Activated CD4-positive, alpha-beta T cell treated with anti-CD3 and anti-CD28 coated beads, Interleukin-2, amount 10 ng/mL, durations not matched to agents 24 days and 14 days (primary cell): ENCODE measurements at regions of chr20 and their contacts with region 1.

Region 1: DNA sequence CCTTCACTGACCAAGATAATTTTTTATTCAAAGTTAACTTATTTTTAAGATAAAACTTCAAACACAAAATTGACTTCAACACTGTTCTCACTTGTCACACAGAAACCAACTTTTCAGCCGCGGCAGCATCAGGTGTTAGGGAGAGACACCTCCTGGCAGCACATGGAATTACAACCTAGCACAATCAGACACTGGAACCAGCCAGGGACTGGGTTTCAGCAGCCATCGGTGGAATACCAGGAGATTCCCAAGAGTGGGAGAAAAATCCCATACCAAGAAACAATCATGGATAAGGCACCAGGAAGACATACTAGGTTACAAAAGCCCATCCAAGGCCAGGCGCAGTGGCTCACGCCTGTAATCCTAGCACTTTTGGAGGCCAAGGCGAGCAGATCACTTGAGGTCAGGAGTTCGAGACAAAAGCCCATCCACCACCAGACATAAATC is 70.0 kb downstream of the SNX5 start:
- DNase-seq: peak; percentile 90
- H3K4me3 Mint-ChIP-seq: no peak overlapping the region
- H3K27ac Mint-ChIP-seq: no peak overlapping the region
- H3K4me1 Mint-ChIP-seq: peaks cover 24% of the 10 kb centered on the region
- H3K27me3 Mint-ChIP-seq: peaks cover 33% of the 10 kb centered on the region

Region 2: GRCh38 chr20:17504898-17505635 is 393.5 kb before region 1 on chr20:
- intact Hi-C with region 1: loop called (anchors 1 kb)
- DNase-seq: peak; percentile 90
- H3K4me3 Mint-ChIP-seq: peak overlapping the region; percentile 88
- H3K27ac Mint-ChIP-seq: peak overlapping the region; percentile 92
- H3K4me1 Mint-ChIP-seq: peaks cover 47% of the 10 kb centered on the region
- H3K27me3 Mint-ChIP-seq: peaks cover 4% of the 10 kb centered on the region

Region 3: GRCh38 chr20:17662333-17663039 is 236.1 kb before region 1 on chr20:
- intact Hi-C with region 1: loop called (anchors 5 kb)
- DNase-seq: no peak
- H3K4me3 Mint-ChIP-seq: peak overlapping the region; percentile 28
- H3K27ac Mint-ChIP-seq: peak overlapping the region; percentile 73
- H3K4me1 Mint-ChIP-seq: peaks cover 49% of the 10 kb centered on the region
- H3K27me3 Mint-ChIP-seq: no peaks in the 10 kb centered on the region

Region 4: DNA sequence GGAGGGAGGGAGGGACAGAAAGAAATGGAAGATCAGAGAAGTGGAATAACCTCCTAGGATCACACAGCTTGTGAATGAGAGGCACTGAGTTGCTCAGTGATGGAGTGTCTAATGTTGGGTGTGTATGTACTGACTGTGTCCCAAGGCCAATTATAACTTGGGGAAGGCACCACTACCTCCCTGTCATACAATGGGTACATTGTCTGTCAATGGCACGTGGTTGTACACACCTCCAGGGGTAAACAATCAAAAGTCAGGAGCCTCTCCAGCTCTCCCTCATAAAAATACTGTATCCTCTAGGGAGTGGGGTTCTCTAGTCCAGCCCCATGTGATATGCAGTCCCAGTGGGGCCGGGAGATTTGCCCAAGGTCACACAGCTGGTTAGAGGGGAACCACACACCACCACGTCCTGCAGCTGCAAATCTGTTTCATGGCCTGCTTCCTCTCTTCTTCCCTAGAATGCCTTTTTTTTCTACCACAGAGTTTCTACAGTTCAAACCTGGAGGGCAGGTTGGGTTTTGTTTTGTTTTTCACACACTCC is 42.5 kb before region 1 on chr20:
- intact Hi-C with region 1: loop called (anchors 5 kb)
- DNase-seq: peak; percentile 69
- H3K4me3 Mint-ChIP-seq: no peak overlapping the region
- H3K27ac Mint-ChIP-seq: no peak overlapping the region
- H3K4me1 Mint-ChIP-seq: peaks cover 21% of the 10 kb centered on the region
- H3K27me3 Mint-ChIP-seq: peaks cover 14% of the 10 kb centered on the region

Region 5: GRCh38 chr20:17958373-17959256 is 60.0 kb after region 1 on chr20:
- intact Hi-C with region 1: loop called (anchors 5 kb)
- DNase-seq: no peak
- H3K4me3 Mint-ChIP-seq: peak overlapping the region; percentile 44
- H3K27ac Mint-ChIP-seq: peak overlapping the region; percentile 71
- H3K4me1 Mint-ChIP-seq: peaks cover 76% of the 10 kb centered on the region
- H3K27me3 Mint-ChIP-seq: no peaks in the 10 kb centered on the region